Caco-2 (cell line): ENCODE measurements at regions of chr5 and their contacts with region 1.

Region 1: GRCh38 chr5:79878721-79879336 is 112.2 kb downstream of the MTX3 start:
- DNase-seq: peak in 1 of 2 experiments; percentile 48
- H3K4me3 ChIP-seq: no peak overlapping the region
- H3K4me3 Mint-ChIP-seq: no peak overlapping the region
- H3K27ac Mint-ChIP-seq: no peak overlapping the region
- H3K4me1 ChIP-seq: no peaks in the 10 kb centered on the region
- H3K4me1 Mint-ChIP-seq: no peaks in the 10 kb centered on the region
- H3K27me3 ChIP-seq: no peaks in the 10 kb centered on the region
- H3K27me3 Mint-ChIP-seq: no peaks in the 10 kb centered on the region
- CTCF ChIP-seq: peak; percentile 32 to 40

Region 2: DNA sequence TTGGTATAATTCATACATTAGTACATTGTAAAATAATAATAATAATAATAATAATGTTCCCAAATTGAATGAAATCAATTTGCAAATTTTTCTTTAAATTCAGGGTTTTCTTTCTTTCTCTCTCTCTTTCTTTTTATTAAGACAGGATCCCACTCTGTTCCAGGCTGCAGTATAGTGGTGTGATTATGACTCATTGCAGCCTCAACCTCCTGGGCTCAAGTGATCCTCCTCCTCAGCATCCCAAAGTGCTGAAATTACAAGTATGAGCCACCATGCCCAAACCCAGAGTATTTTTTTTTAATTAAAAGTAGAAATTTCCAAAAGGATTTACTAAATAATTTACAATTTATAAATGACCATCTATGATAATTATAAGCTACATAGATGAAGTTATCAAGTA is 482.6 kb before region 1 on chr5:
- CTCF ChIA-PET with region 1: no interaction called
- POLR2A ChIA-PET with region 1: no interaction called
- intact Hi-C with region 1: no loop called
- DNase-seq: no peak
- H3K4me3 ChIP-seq: no peak overlapping the region
- H3K4me3 Mint-ChIP-seq: no peak overlapping the region
- H3K27ac Mint-ChIP-seq: no peak overlapping the region
- H3K4me1 ChIP-seq: no peaks in the 10 kb centered on the region
- H3K4me1 Mint-ChIP-seq: no peaks in the 10 kb centered on the region
- H3K27me3 ChIP-seq: no peaks in the 10 kb centered on the region
- H3K27me3 Mint-ChIP-seq: no peaks in the 10 kb centered on the region
- CTCF ChIP-seq: no peak

Region 3: DNA sequence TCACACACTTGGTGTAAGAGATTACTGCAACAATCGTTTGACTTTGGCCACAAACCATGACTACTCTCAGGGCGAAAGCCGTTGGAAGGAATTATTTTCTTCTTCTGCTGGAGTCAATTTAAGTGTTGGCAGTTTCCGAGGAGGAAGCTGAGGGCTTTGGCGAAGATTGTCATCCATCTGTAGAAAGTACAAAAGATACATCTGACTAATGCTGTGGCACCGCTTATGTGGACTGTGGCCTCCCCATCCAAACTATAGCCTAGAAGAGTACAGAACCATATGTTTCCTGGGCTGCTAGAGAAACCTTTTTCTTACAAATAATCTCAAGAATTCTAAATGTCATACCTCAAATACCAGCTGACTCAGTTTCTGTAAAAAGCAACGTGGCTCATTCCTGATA is 104.8 kb after region 1 on chr5:
- CTCF ChIA-PET with region 1: no interaction called
- POLR2A ChIA-PET with region 1: interaction called, 11 read pairs
- intact Hi-C with region 1: no loop called
- DNase-seq: no peak
- H3K4me3 ChIP-seq: no peak overlapping the region
- H3K4me3 Mint-ChIP-seq: no peak overlapping the region
- H3K27ac Mint-ChIP-seq: no peak overlapping the region
- H3K4me1 ChIP-seq: 0 out of 2 replicates have a peak, but pooled peaks cover 3% of the 10 kb centered on the region
- H3K4me1 Mint-ChIP-seq: no peaks in the 10 kb centered on the region
- H3K27me3 ChIP-seq: no peaks in the 10 kb centered on the region
- H3K27me3 Mint-ChIP-seq: no peaks in the 10 kb centered on the region
- CTCF ChIP-seq: no peak

Region 4: DNA sequence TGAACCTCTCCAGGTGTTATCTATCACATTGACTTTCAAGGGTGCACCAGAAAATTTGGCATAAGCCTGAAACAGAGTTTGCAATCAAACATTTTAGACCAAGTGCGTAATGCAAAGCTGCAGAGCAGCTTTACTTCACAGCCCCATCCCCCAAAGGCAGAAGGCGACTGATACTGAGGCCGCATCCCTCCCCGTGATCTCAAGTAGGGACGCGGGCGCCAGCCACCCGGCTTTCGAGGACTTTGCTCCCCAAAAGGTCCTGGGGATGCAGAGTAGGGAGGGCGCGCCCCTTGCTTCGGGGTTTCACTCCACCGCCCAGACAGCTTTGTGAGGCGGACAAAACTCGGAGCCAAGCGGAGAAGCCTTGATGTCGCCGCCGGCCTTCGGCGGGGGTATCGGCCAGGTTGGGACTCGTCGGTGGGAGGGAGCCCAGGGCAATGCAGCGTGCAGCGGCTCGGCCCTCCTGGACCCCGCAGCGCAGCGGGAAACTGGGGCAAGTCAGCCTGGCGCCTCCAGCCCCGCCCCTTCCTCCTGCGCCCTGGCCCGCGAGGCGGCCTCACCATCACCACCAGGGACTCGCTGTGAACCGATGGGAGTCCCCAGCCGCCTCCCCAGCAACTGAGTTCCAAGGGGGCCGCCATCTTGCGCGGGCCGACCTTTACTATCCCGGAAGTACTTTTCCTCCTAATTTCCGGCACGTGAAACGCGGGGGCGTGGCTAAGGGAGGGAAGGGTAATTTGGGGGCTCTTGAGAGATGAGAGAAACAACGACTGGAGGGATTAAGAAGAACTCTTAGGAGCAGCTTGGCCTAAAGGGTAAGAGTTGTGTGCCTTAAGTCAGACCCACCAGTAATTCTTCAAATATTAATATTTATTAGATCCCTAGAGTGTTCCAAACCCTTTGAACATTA is 112.0 kb after region 1 on chr5 and contains the start of gene MTX3:
- CTCF ChIA-PET with region 1: no interaction called
- POLR2A ChIA-PET with region 1: no interaction called
- intact Hi-C with region 1: loop called (anchors 10 kb)
- DNase-seq: peak; percentile 70 to 77
- H3K4me3 ChIP-seq: peak within 1 kb of the TSS; percentile 61
- H3K4me3 Mint-ChIP-seq: peak within 1 kb of the TSS; percentile 60
- H3K27ac Mint-ChIP-seq: no peak within 1 kb of the TSS
- H3K4me1 ChIP-seq: 0 out of 2 replicates have a peak, but pooled peaks cover 3% of the 10 kb centered on the region
- H3K4me1 Mint-ChIP-seq: no peaks in the 10 kb centered on the region
- H3K27me3 ChIP-seq: no peaks in the 10 kb centered on the region
- H3K27me3 Mint-ChIP-seq: peaks cover 8% of the 10 kb centered on the region
- CTCF ChIP-seq: no peak
- total RNA-seq, gene MTX3: 7.4 and 8.4 TPM in 2 replicates